ENCODE measurements at regions of chrX and their contacts with region 1.

Region 1: DNA sequence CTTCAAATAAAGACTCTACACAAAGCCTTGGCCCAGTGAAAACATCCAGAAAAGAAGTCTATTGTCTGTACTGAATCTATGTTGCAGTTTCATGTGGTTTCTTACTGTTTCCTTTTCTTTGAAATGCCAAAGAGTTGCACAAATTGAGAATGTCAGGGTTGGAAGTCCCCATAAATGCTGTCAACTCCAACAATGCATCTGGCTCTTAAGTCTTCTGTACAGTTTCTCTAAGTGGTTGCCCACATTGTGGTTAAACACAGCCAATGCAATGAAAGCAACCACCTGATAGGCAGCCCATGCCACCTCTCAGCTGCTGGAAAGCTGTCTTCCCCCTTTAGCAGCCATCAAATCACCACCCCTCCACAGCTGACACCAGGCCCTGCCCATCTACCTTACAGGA is 67.2 kb upstream of the C1GALT1C1 start:
- DNase-seq: peak; percentile 46
- H3K4me3 Mint-ChIP-seq: peak overlapping the region; percentile 24
- H3K27ac Mint-ChIP-seq: peak overlapping the region; percentile 89
- H3K4me1 Mint-ChIP-seq: peaks cover 15% of the 10 kb centered on the region
- H3K27me3 Mint-ChIP-seq: no peaks in the 10 kb centered on the region

Region 2: GRCh38 chrX:120736989-120737388 is 39.9 kb after region 1 on chrX:
- intact Hi-C with region 1: loop called (anchors 1 kb)
- DNase-seq: no peak
- H3K4me3 Mint-ChIP-seq: no peak overlapping the region
- H3K27ac Mint-ChIP-seq: peak overlapping the region; percentile 31
- H3K4me1 Mint-ChIP-seq: peaks cover 27% of the 10 kb centered on the region
- H3K27me3 Mint-ChIP-seq: no peaks in the 10 kb centered on the region